ENCODE measurements at regions of chr2 and their contacts with region 1.

Region 1: GRCh38 chr2:164992818-164993217 is 37.5 kb upstream of the SLC38A11 start:
- DNase-seq: peak; percentile 89
- ATAC-seq: peak; percentile 55
- H3K4me3 ChIP-seq: no peak overlapping the region
- H3K27ac ChIP-seq: no peak overlapping the region
- H3K4me1 ChIP-seq: peaks cover 8% of the 10 kb centered on the region
- H3K27me3 ChIP-seq: no peaks in the 10 kb centered on the region
- CTCF ChIP-seq: peak; percentile 68
- POLR2A ChIP-seq: no peak
- RAD21 ChIP-seq: peak; percentile 61

Region 2: DNA sequence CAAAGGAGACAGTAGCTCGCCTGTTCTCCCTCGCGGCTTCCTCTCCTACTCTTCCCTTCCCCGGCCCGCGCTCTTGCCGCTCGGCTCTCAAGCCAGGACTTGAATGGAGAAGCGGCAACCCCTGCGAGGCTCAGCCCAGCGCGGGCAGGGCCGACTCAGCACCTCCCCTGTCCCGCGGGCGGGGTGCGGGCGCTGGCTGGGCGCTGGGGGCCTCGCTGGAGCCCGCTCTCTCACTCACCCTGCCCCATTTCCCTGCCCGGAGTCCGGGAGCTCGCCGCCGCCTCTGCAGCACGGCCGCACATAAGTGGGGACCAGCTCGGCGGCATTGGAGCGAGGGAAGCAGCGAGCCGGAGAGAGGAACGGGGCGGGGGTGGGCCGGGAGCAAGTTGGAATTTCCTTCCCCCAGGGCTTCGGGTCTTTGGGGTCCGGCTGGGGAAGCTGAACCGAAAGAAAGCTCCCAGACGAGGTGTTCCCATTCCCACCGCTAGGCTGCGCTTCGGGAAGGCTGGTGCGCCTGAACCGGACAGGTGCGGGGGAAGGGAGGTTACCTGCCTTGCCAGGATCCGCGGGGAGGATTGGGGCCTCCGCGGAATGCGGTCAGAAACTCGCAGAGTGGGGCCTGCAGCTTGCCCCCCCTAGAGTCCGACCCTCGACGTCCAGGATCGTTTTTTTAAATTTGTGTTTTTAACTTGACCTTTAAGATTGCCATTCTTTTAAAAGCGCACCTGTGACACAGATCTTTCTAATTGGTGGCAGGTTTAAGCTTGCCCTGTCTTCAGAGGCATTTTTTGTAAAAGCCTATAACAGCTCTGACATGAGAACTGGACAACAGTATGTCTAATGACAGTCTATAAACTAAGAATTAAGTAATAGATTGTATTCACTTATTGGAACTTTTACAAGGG is 150.8 kb before region 1 on chr2 and contains the start of gene COBLL1:
- CTCF ChIA-PET with region 1: interaction called, 4 read pairs
- POLR2A ChIA-PET with region 1: no interaction called
- dilution Hi-C with region 1: no loop called
- in situ Hi-C with region 1: no loop called
- intact Hi-C with region 1: loop called (anchors 5 kb)
- DNase-seq: peak; percentile 41
- ATAC-seq: peak; percentile 78
- H3K4me3 ChIP-seq: peak within 1 kb of the TSS; percentile 86
- H3K27ac ChIP-seq: peak within 1 kb of the TSS; percentile 10; the same call in 1 of the 2 replicates
- H3K4me1 ChIP-seq: no peaks in the 10 kb centered on the region
- H3K27me3 ChIP-seq: peaks cover 6% of the 10 kb centered on the region
- CTCF ChIP-seq: peak; percentile 57
- POLR2A ChIP-seq: no peak
- RAD21 ChIP-seq: peak; percentile 14; the same call in 1 of the 2 replicates
- total RNA-seq, gene COBLL1: 1.1 and 2.2 TPM in 2 replicates

Region 3: DNA sequence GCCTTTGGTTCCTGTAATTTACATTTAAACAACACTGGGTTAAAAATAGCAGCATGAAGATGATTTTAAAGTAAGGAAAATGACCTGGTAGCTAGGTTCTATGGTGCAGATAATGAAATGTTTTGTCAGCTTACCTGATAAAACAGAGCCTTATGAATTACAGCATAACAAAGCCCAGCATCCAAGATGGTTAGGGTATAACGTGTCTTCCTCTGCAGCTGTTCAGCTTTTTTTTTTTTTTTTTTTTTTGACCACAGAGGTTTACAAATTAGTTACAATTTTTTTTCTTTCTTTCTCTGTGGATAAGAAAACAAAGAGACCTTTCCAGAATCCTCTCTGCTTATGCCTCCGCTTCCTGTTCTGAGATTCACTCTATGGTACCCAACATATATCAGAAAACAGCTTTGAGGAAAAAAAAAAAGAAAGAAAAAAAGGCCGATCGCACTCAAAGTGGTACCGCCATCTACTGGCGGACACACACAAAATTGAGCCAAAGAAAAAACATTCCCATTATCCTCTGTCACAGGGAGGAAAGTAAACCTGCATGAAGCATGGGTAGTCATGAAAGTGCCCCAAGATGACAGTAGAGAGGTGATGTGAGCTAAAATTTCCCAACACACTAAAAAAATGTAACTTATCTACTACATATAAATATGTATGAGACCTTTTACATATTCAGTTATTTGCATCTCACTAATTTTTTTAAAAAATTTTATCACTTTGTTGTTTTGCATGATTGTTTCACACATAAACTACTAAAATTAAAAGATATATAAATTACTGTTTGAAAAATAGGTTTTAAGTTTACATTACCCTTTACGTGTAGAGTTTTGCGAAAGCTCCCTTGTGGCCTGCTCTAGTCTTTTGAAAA is 211.1 kb after region 1 on chr2 and contains the start of gene SCN3A:
- CTCF ChIA-PET with region 1: no interaction called
- POLR2A ChIA-PET with region 1: interaction called, 3 read pairs
- dilution Hi-C with region 1: no loop called
- in situ Hi-C with region 1: no loop called
- intact Hi-C with region 1: loop called (anchors 1 kb)
- DNase-seq: peak; percentile 45
- ATAC-seq: peak; percentile 37; the same call in 1 of the 2 replicates
- H3K4me3 ChIP-seq: no peak within 1 kb of the TSS
- H3K27ac ChIP-seq: no peak within 1 kb of the TSS
- H3K4me1 ChIP-seq: no peaks in the 10 kb centered on the region
- H3K27me3 ChIP-seq: no peaks in the 10 kb centered on the region; the same call in 1 of the 2 replicates
- CTCF ChIP-seq: peak; percentile 82
- POLR2A ChIP-seq: no peak
- RAD21 ChIP-seq: peak; percentile 75
- total RNA-seq, gene SCN3A: 0.90 and 1.4 TPM in 2 replicates

Region 4: GRCh38 chr2:165874445-165875039 is 881.7 kb after region 1 on chr2:
- CTCF ChIA-PET with region 1: no interaction called
- POLR2A ChIA-PET with region 1: no interaction called
- dilution Hi-C with region 1: no loop called
- in situ Hi-C with region 1: no loop called
- intact Hi-C with region 1: loop called (anchors 10 kb)
- DNase-seq: peak; percentile 75
- ATAC-seq: peak; percentile 90
- H3K4me3 ChIP-seq: no peak overlapping the region
- H3K27ac ChIP-seq: no peak overlapping the region
- H3K4me1 ChIP-seq: no peaks in the 10 kb centered on the region; the same call in 1 of the 2 replicates
- H3K27me3 ChIP-seq: no peaks in the 10 kb centered on the region
- CTCF ChIP-seq: peak; percentile 88
- POLR2A ChIP-seq: no peak
- RAD21 ChIP-seq: peak; percentile 87